PC-9 (cell line): ENCODE measurements at regions of chr20 and their contacts with region 1.

Region 1: DNA sequence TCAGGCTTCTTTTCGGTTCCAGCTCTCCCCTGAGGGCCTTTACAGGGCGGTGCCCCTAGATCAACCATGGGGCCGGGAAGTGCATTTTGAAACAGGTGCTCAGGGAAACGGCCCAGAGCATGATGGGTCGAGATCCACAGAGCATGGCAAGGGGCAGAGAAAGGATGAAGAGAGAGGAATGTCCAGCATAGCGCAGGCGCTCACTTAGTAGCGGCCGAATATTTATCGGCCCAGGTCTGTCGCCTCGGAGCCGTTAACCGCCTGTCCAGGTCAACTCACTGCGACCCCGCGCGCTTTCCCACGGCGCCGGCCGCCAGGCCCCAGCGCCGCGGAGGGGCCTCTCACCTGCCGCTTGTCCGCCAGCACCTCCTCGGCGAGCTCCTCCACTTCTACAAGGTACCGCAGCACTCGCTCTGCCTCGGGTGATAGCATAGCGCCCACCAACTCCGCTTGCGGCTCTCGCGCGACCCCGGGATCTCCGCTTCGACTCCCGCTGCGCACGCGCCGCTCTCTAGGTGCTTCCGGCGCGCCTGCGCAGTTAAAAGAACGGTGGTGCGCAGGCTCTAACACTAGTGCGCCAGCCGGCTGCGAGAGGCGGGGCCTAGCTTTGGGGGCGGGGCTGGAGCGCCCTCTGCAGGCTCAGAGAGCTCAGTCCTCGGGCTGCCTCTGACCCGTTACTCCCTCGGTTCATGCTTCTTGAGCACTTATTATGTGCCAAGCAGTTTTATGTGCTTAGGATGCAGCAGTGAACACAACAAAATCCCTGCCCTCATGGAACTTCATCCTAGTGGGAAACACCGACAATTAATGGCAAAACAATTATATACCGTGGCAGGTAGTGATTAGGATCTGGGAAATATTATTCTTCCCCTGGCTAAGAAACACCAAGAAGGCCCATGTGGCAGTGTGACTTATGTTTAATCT is at the start of gene PDRG1:
- DNase-seq: peak; percentile 83 to 98
- H3K4me3 ChIP-seq: peak within 1 kb of the TSS; percentile 99
- H3K27ac ChIP-seq: no peak within 1 kb of the TSS
- H3K4me1 ChIP-seq: peaks cover 8% of the 10 kb centered on the region
- H3K27me3 ChIP-seq: peaks cover 7% of the 10 kb centered on the region; the same call in 1 of the 2 replicates
- CTCF ChIP-seq: peak; percentile 90
- total RNA-seq, gene PDRG1: 13.7 and 15.3 TPM in 2 replicates

Region 2: GRCh38 chr20:31572701-31573554 is 378.9 kb before region 1 on chr20:
- CTCF ChIA-PET with region 1: no interaction called
- POLR2A ChIA-PET with region 1: interaction called, 27 read pairs
- intact Hi-C with region 1: no loop called
- DNase-seq: peak; percentile 95 to 100
- H3K4me3 ChIP-seq: peak overlapping the region; percentile 64
- H3K27ac ChIP-seq: peak overlapping the region; percentile 96
- H3K4me1 ChIP-seq: peaks cover 46% of the 10 kb centered on the region
- H3K27me3 ChIP-seq: no peaks in the 10 kb centered on the region
- CTCF ChIP-seq: no peak

Region 3: GRCh38 chr20:31691646-31692275 is 260.0 kb before region 1 on chr20:
- CTCF ChIA-PET with region 1: no interaction called
- POLR2A ChIA-PET with region 1: no interaction called
- intact Hi-C with region 1: no loop called
- DNase-seq: no peak
- H3K4me3 ChIP-seq: no peak overlapping the region
- H3K27ac ChIP-seq: peak overlapping the region; percentile 8; the same call in 1 of the 2 replicates
- H3K4me1 ChIP-seq: peaks cover 48% of the 10 kb centered on the region
- H3K27me3 ChIP-seq: no peaks in the 10 kb centered on the region
- CTCF ChIP-seq: no peak

Region 4: GRCh38 chr20:31835977-31836852 is 115.6 kb before region 1 on chr20:
- CTCF ChIA-PET with region 1: interaction called, 4 read pairs
- POLR2A ChIA-PET with region 1: no interaction called
- intact Hi-C with region 1: loop called (anchors 1 kb)
- DNase-seq: peak; percentile 72 to 94
- H3K4me3 ChIP-seq: no peak overlapping the region
- H3K27ac ChIP-seq: no peak overlapping the region
- H3K4me1 ChIP-seq: peaks cover 12% of the 10 kb centered on the region
- H3K27me3 ChIP-seq: no peaks in the 10 kb centered on the region
- CTCF ChIP-seq: no peak

Region 5: GRCh38 chr20:32018269-32019074 is 66.7 kb after region 1 on chr20:
- CTCF ChIA-PET with region 1: no interaction called
- POLR2A ChIA-PET with region 1: no interaction called
- intact Hi-C with region 1: loop called (anchors 5 kb)
- DNase-seq: peak; percentile 52 to 84
- H3K4me3 ChIP-seq: peak overlapping the region; percentile 60; the same call in 1 of the 2 replicates
- H3K27ac ChIP-seq: no peak overlapping the region
- H3K4me1 ChIP-seq: 0 out of 2 replicates have a peak, but pooled peaks cover 4% of the 10 kb centered on the region
- H3K27me3 ChIP-seq: peaks cover 82% of the 10 kb centered on the region
- CTCF ChIP-seq: no peak

Region 6: GRCh38 chr20:32091888-32092346 is 140.1 kb after region 1 on chr20:
- CTCF ChIA-PET with region 1: no interaction called
- POLR2A ChIA-PET with region 1: no interaction called
- intact Hi-C with region 1: loop called (anchors 5 kb)
- DNase-seq: peak; percentile 59 to 83
- H3K4me3 ChIP-seq: no peak overlapping the region
- H3K27ac ChIP-seq: no peak overlapping the region
- H3K4me1 ChIP-seq: no peaks in the 10 kb centered on the region
- H3K27me3 ChIP-seq: peaks cover 40% of the 10 kb centered on the region
- CTCF ChIP-seq: peak; percentile 91